ENCODE measurements at regions of chr5 and their contacts with region 1.

Region 1: DNA sequence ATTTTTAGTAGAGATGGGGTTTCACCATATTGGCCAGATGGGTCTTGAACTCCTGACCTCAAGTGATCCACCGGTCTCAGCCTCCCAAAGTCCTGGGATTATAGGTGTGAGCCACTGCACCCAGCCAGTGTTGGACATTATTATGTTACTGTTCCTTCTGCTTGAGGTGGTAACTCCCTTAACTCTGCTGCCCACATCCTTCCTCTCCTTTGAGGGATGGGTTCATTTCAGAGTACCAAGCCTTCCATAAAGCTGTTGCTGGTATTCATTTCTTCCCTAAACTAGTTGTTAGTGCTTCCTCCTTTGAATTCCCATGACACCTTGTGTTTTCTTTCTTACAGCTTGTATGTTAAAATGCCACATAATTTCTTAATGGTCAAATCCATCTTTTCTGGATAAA is 54.0 kb downstream of the CTNNA1 start:
- DNase-seq: no peak
- H3K4me3 ChIP-seq: no peak overlapping the region
- H3K4me3 Mint-ChIP-seq: peak overlapping the region in 7 of 8 donors; percentile 2 to 78 (median 33)
- H3K27ac ChIP-seq: no peak overlapping the region
- H3K27ac Mint-ChIP-seq: peak overlapping the region in 3 of 7 donors; percentile 1 to 22 (median 6)
- H3K4me1 ChIP-seq: peaks cover 8% of the 10 kb centered on the region
- H3K4me1 Mint-ChIP-seq: peaks cover 12 to 15% (median 14%) of the 10 kb centered on the region in 4 donors
- H3K27me3 ChIP-seq: no peaks in the 10 kb centered on the region
- H3K27me3 Mint-ChIP-seq: no peaks in the 10 kb centered on the region

Region 2: GRCh38 chr5:138469540-138470321 is 337.5 kb before region 1 on chr5:
- CTCF ChIA-PET with region 1: no interaction called
- POLR2A ChIA-PET with region 1: no interaction called
- intact Hi-C with region 1: no loop called
- DNase-seq: no peak
- H3K4me3 ChIP-seq: no peak overlapping the region
- H3K4me3 Mint-ChIP-seq: no peak overlapping the region
- H3K27ac ChIP-seq: no peak overlapping the region
- H3K27ac Mint-ChIP-seq: peak overlapping the region in 2 of 7 donors; percentile 41 to 59
- H3K4me1 ChIP-seq: peaks cover 22% of the 10 kb centered on the region
- H3K4me1 Mint-ChIP-seq: peaks cover 13 to 29% (median 21%) of the 10 kb centered on the region in 4 donors
- H3K27me3 ChIP-seq: no peaks in the 10 kb centered on the region
- H3K27me3 Mint-ChIP-seq: no peaks in the 10 kb centered on the region

Region 3: DNA sequence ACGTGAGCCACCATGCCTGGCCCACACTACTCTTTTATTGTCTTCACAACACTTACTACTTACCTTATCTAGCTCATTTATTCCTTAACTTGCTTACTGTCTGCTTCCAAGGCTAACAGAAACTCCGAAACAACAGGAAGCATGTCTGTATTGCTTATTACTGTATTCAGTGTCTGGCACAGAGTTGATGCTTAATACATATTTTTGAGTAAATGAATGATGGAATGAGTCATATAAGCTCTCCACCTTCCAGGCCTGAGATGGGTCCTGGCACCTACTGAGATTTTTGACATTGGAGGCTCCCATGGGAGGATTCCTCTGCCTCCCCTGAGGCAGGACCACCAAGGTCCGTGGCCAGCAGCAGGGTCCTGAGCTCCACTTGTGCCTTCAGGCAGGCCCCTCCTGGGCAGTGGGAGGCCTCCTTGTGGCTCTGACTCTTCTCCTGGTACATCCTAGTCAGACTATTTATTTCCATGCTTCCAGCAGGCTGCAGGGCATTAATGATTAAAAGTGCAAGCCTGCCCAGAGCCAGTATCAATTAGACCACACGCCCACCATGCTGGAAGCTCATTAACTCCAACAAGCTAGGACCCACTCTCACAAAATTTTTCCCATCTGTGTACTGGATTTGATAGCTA is 130.5 kb before region 1 on chr5:
- CTCF ChIA-PET with region 1: no interaction called
- POLR2A ChIA-PET with region 1: no interaction called
- intact Hi-C with region 1: no loop called
- DNase-seq: no peak
- H3K4me3 ChIP-seq: no peak overlapping the region
- H3K4me3 Mint-ChIP-seq: no peak overlapping the region
- H3K27ac ChIP-seq: no peak overlapping the region
- H3K27ac Mint-ChIP-seq: peak overlapping the region in 1 of 7 donors; percentile 30
- H3K4me1 ChIP-seq: no peaks in the 10 kb centered on the region
- H3K4me1 Mint-ChIP-seq: no peaks in the 10 kb centered on the region
- H3K27me3 ChIP-seq: no peaks in the 10 kb centered on the region
- H3K27me3 Mint-ChIP-seq: peaks cover 34 to 39% of the 10 kb centered on the region in 2 donors

Region 4: GRCh38 chr5:138789771-138790242 is 17.4 kb before region 1 on chr5:
- CTCF ChIA-PET with region 1: interaction called, 10 read pairs
- POLR2A ChIA-PET with region 1: interaction called, 5 read pairs
- intact Hi-C with region 1: no loop called
- DNase-seq: peak in 4 of 5 donors; percentile 7 to 26 (median 13)
- H3K4me3 ChIP-seq: no peak overlapping the region
- H3K4me3 Mint-ChIP-seq: no peak overlapping the region
- H3K27ac ChIP-seq: no peak overlapping the region
- H3K27ac Mint-ChIP-seq: no peak overlapping the region
- H3K4me1 ChIP-seq: peaks cover 8% of the 10 kb centered on the region
- H3K4me1 Mint-ChIP-seq: peaks cover 12 to 19% (median 16%) of the 10 kb centered on the region in 4 donors
- H3K27me3 ChIP-seq: no peaks in the 10 kb centered on the region
- H3K27me3 Mint-ChIP-seq: peaks cover 2 to 5% of the 10 kb centered on the region in 2 donors

Measured in CD4-positive, alpha-beta memory T cell (primary cell).